ENCODE measurements at regions of chr16 and their contacts with region 1.

Region 1: DNA sequence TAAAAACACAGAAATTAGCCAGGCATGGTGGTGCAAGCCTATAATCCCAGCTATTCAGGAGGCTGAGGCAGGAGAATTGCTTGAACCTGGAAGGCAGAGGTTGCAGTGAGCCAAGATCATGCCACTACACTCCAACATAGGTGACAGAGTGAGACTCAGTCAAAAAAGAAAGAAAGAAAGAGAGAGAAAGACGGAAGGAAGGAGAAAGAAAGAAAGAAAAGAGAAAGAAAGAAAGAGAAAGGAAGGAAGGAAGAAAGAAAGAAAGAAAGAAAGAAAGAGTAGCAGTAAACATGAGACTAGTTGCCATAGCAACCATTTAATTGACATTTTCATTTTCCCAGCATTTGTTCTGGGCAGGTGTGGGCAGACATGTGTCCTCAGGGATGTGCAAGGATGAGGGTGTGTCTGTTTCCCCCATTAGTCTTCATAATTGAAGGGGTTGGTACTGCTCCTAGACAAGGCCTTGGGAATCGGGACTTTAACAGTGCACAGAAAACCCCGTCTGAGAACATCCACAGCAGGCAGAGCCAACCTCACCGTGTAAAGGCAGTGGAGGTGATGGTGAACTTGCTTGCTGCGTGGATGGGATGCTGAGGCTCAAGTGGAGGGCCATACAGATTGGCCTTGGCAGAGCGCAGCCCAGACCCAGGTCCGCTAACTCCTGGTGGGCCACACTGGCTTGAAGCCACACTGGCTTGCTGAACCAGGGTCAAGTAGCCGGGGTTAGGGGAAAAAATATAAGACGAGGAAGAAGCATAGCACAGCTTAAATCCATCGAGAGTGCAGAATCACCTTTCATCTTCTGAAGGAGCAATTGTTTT is 35.2 kb upstream of the KIFC3 start:
- DNase-seq: no peak
- ATAC-seq: no peak
- H3K4me3 ChIP-seq: no peak overlapping the region
- H3K27ac ChIP-seq: no peak overlapping the region
- H3K4me1 ChIP-seq: peaks cover 50% of the 10 kb centered on the region
- H3K27me3 ChIP-seq: no peaks in the 10 kb centered on the region
- CTCF ChIP-seq: no peak
- EP300 ChIP-seq: no peak
- POLR2A ChIP-seq: no peak
- RAD21 ChIP-seq: no peak

Region 2: DNA sequence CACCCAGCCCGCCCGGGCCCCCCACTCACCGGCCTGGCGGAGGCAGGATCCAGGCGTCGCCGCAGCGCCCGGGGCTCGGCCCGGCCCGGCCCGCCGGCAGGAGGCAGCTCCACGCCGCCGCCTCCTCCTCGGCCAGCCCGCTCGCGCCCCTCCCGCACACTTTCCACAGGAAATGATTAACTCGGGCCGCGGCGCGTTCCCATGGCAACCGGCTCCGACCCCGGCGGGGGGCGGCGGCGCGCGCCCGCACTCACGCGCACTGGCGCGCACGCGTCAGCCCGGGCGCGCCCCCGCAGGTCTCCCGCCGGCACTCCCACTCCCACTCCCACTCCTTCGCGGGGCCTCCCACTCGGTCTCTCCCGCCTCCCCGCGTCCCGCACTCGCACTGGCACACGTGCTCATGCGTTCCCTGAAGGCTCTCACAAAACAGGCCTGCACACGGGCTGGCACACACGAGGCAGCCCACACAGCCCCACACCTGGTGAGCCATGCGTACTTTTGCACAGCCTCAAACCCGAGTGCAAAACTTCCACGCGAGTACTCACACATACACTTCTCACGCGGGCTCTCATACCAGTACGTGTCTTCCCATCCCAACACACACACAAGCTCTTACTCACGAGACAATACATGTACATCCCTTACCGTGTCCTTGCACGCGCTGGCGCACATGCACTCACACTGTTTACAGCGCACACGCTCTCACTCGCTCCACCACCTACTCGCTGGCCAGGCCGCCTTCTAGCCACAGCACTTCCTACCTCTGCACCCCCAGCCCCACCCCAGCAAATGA is 35.0 kb before region 1 on chr16 and contains the start of gene KIFC3:
- CTCF ChIA-PET with region 1: no interaction called
- POLR2A ChIA-PET with region 1: interaction called, 10 read pairs
- in situ Hi-C with region 1: no loop called
- intact Hi-C with region 1: loop called (anchors 5 kb)
- DNase-seq: peak; percentile 79
- ATAC-seq: peak; percentile 46
- H3K4me3 ChIP-seq: peak within 1 kb of the TSS; percentile 77 to 89 (median 82)
- H3K27ac ChIP-seq: peak within 1 kb of the TSS; percentile 73
- H3K4me1 ChIP-seq: peaks cover 83% of the 10 kb centered on the region
- H3K27me3 ChIP-seq: no peaks in the 10 kb centered on the region
- CTCF ChIP-seq: peak; percentile 50; the same call in 1 of the 2 replicates
- EP300 ChIP-seq: peak; percentile 6 to 42; a peak in 2 of 4 replicates
- POLR2A ChIP-seq: peak in 1 of 2 experiments; percentile 45; a peak in 2 of 4 replicates
- RAD21 ChIP-seq: peak; percentile 89
- total RNA-seq, gene KIFC3: 30.0 and 45.3 TPM in 2 replicates

Region 3: GRCh38 chr16:57882792-57883191 is 45.3 kb after region 1 on chr16:
- CTCF ChIA-PET with region 1: no interaction called
- POLR2A ChIA-PET with region 1: no interaction called
- in situ Hi-C with region 1: no loop called
- intact Hi-C with region 1: no loop called
- DNase-seq: no peak
- ATAC-seq: no peak
- H3K4me3 ChIP-seq: no peak overlapping the region
- H3K27ac ChIP-seq: no peak overlapping the region
- H3K4me1 ChIP-seq: peaks cover 38% of the 10 kb centered on the region
- H3K27me3 ChIP-seq: peaks cover 2 to 36% of the 10 kb centered on the region in 2 experiments; a peak in 4 of 5 replicates
- CTCF ChIP-seq: no peak
- EP300 ChIP-seq: no peak
- POLR2A ChIP-seq: no peak
- RAD21 ChIP-seq: no peak

Region 4: GRCh38 chr16:57899771-57900661 is 62.5 kb after region 1 on chr16:
- CTCF ChIA-PET with region 1: no interaction called
- POLR2A ChIA-PET with region 1: no interaction called
- in situ Hi-C with region 1: no loop called
- intact Hi-C with region 1: no loop called
- DNase-seq: peak; percentile 60
- ATAC-seq: peak; percentile 52
- H3K4me3 ChIP-seq: peak overlapping the region in 2 of 3 experiments; percentile 18 to 37; a peak in 4 of 6 replicates
- H3K27ac ChIP-seq: no peak overlapping the region
- H3K4me1 ChIP-seq: peaks cover 82% of the 10 kb centered on the region
- H3K27me3 ChIP-seq: peaks cover 12 to 38% of the 10 kb centered on the region in 2 experiments; a peak in 4 of 5 replicates
- CTCF ChIP-seq: peak; percentile 93
- EP300 ChIP-seq: peak in 1 of 2 experiments; percentile 27; a peak in 1 of 4 replicates
- POLR2A ChIP-seq: no peak
- RAD21 ChIP-seq: peak; percentile 82